ENCODE measurements at regions of chr2 and their contacts with region 1.

Region 1: DNA sequence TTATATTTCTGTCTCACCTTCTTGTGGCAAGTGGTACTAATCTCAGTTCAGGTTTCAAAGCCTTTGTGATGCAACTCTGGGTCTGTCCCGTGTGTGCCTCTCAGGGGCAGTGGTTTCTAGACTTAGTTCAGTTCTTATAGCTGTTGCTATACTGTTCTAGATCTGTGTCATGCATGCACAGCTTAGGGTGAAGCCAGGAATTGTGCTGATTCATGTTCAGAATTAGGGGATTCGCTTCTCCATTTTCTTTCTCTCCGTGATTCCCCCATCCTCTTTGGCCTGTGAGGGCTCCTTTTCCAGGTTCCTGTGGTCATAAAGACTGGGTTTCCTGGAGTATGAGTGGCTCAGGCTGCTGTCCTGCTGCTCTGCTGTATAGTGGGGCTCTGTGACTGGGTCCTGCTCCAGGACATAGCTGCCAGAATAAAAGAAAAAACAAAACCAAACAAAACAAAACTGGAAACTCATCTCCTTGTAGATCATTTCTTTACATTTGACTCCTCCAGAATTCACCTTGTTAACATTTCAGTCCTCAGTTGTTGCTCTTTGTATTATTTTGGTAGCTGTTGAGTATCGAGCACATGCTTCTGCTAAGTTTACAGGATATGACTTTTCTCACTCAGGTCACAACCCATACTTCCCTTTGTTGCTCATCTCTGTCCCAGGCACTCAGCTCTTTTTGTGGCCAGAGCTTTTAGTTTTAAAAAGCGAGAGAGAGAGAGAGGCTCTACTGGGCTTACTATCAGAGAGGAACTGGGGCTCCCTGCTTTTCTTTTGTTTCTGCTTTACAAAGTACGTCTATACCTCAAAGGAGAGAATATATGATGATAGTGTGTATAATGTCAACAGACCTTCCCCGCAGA is 34.2 kb downstream of the CERS6 start:
- DNase-seq: peak; percentile 78
- ATAC-seq: peak; percentile 92
- H3K4me3 Mint-ChIP-seq: peak overlapping the region; percentile 61
- H3K27ac Mint-ChIP-seq: peak overlapping the region; percentile 88
- H3K4me1 Mint-ChIP-seq: peaks cover 50% of the 10 kb centered on the region
- H3K27me3 Mint-ChIP-seq: peaks cover 7% of the 10 kb centered on the region

Region 2: GRCh38 chr2:168246483-168247340 is 243.5 kb before region 1 on chr2:
- CTCF ChIA-PET with region 1: no interaction called
- POLR2A ChIA-PET with region 1: no interaction called
- intact Hi-C with region 1: loop called (anchors 5 to 10 kb)
- DNase-seq: peak; percentile 85
- ATAC-seq: peak; percentile 47
- H3K4me3 Mint-ChIP-seq: peak overlapping the region; percentile 94
- H3K27ac Mint-ChIP-seq: peak overlapping the region; percentile 96
- H3K4me1 Mint-ChIP-seq: peaks cover 28% of the 10 kb centered on the region
- H3K27me3 Mint-ChIP-seq: no peaks in the 10 kb centered on the region

Region 3: DNA sequence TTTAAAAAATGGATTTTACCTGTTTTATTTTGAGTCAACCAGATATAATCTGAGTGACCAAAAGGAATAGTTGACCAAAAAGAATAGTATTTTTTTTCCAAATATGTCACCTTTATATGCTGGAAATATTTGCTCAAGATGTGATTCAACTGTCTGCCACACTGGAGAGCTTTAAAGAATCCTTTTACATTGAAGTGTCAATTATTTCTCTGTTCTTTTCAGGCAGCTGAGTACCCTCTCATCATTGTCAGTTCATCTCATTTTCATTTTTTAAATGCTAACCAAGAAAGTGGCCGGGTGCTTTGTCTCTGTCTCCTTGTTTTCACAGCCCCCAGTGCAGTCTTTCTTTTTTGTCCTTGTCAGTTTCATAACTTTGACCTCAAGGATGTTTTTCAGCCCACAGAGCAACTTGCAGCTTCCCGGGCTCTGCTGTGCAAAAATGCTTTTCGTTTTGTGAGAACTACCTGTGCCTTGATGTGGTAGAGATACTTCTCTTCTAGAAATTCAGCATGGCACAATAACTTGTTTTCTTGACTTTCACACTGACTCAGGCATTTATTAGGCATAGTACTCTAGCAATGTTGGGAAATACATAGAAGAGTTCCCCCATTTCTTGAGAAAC is 57.6 kb before region 1 on chr2:
- CTCF ChIA-PET with region 1: interaction called, 6 read pairs
- POLR2A ChIA-PET with region 1: interaction called, 3 read pairs
- intact Hi-C with region 1: loop called (anchors 1 kb)
- DNase-seq: peak; percentile 47
- ATAC-seq: peak; percentile 76
- H3K4me3 Mint-ChIP-seq: peak overlapping the region; percentile 41
- H3K27ac Mint-ChIP-seq: peak overlapping the region; percentile 37
- H3K4me1 Mint-ChIP-seq: peaks cover 52% of the 10 kb centered on the region
- H3K27me3 Mint-ChIP-seq: no peaks in the 10 kb centered on the region

Region 4: DNA sequence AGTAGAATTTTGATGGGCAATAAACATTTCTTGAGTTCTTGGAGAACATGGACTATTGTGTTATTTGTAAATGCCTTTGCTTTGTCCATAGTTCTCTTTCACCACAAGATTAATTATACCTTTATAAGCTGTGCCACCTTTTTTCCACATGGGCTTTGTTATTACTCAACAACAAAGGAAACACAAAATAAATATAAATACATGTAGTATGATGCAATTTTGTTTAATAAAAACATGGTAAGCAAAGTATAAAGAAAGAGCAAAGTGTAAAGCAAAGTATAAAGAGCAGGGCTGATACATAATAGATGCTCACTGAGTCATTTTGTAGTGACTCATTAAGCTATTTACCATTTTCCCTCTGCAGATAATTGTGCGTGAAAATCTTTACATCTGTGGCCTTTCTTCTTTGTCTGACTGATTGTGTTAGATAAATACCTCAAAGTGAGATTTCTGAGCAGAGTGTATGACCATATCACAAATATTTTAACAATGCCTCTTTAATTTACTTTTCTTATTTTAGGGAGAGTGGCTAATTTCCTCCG is 46.8 kb after region 1 on chr2:
- CTCF ChIA-PET with region 1: no interaction called
- POLR2A ChIA-PET with region 1: no interaction called
- intact Hi-C with region 1: loop called (anchors 1 to 2 kb)
- DNase-seq: no peak
- ATAC-seq: peak; percentile 82
- H3K4me3 Mint-ChIP-seq: no peak overlapping the region
- H3K27ac Mint-ChIP-seq: no peak overlapping the region
- H3K4me1 Mint-ChIP-seq: peaks cover 50% of the 10 kb centered on the region
- H3K27me3 Mint-ChIP-seq: no peaks in the 10 kb centered on the region

Region 5: DNA sequence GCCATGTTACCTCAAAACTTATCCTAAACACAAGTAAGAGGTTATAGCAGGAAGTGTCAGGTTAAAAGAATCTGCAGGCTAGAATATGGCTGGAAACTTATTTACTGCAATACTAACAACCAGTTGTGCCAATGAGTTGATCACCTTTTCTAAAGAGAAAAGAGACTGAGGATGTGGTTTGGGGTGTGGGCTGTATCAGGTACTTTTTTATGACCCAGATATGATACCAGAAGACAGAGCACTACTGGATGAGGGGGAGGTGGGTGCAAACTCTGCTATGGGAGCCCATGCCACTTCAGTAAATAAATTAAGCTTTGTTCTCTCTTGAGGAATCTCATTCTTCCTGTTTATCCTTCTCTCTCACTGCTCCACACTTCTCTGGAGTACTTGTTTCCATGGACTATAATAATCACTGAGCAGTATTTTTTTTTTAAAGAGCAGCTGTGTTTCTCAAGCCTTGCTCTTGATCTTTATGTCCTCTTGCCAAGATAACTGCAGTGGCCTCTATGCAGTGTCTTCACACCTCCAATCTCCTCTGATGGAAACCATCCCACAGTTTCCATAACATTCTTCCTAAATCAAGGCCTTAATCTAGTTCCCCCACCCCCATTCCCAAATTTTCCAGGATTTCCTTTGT is 261.0 kb after region 1 on chr2:
- CTCF ChIA-PET with region 1: no interaction called
- POLR2A ChIA-PET with region 1: no interaction called
- intact Hi-C with region 1: loop called in 1 of 2 experiments (anchors 5 kb)
- DNase-seq: peak; percentile 56
- ATAC-seq: peak; percentile 99
- H3K4me3 Mint-ChIP-seq: no peak overlapping the region
- H3K27ac Mint-ChIP-seq: peak overlapping the region; percentile 22
- H3K4me1 Mint-ChIP-seq: peaks cover 67% of the 10 kb centered on the region
- H3K27me3 Mint-ChIP-seq: no peaks in the 10 kb centered on the region

Region 6: DNA sequence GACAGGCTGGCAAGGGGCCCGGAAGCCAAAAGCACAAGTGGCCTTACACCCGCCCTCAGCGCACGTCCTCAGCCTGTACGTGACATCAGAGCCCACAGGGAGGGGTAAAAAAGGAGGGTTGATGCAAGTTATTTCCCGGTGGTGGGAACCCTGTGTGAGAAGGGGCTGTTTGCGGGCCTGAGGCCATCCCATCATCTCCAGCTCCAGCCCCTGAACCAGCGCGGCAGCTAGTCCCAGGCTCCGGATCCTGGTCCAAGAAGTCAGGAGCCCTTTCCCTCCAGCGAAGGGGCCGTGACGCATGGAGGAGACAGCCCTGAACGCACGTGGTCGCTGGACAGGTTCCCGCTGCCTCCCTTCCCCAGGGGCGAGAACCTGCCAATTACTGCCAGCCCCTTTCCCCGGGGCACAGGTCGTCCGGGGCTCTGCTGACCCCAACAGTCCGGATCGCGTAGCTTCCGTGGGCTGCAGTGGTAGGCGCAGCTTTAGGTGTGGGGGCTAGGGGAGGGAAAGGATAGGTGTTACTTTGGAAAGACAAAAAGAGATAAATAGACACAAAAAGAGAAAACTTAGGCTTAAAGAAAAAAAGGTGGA is 873.4 kb after region 1 on chr2:
- CTCF ChIA-PET with region 1: no interaction called
- POLR2A ChIA-PET with region 1: no interaction called
- intact Hi-C with region 1: loop called in 1 of 2 experiments (anchors 1 kb)
- DNase-seq: peak; percentile 80
- ATAC-seq: peak; percentile 73
- H3K4me3 Mint-ChIP-seq: peak overlapping the region; percentile 86
- H3K27ac Mint-ChIP-seq: peak overlapping the region; percentile 49
- H3K4me1 Mint-ChIP-seq: peaks cover 29% of the 10 kb centered on the region
- H3K27me3 Mint-ChIP-seq: peaks cover 38% of the 10 kb centered on the region

Measured in activated CD4-positive, alpha-beta T cell treated with anti-CD3 and anti-CD28 coated beads for 36 hours (primary cell).